Activated CD8-positive, alpha-beta T cell treated with anti-CD3 and anti-CD28 coated beads, Interleukin-2, amount 10 ng/mL, durations not matched to agents 7 days and 5 days (primary cell): ENCODE measurements at regions of chr1 and their contacts with region 1.

Region 1: GRCh38 chr1:160519642-160520435 is 3.2 kb downstream of the SLAMF6 start:
- DNase-seq: peak; percentile 48
- ATAC-seq: peak; percentile 65
- H3K4me3 Mint-ChIP-seq: peak overlapping the region; percentile 83
- H3K27ac Mint-ChIP-seq: peak overlapping the region; percentile 93
- H3K4me1 Mint-ChIP-seq: peaks cover 90% of the 10 kb centered on the region
- H3K27me3 Mint-ChIP-seq: no peaks in the 10 kb centered on the region

Region 2: DNA sequence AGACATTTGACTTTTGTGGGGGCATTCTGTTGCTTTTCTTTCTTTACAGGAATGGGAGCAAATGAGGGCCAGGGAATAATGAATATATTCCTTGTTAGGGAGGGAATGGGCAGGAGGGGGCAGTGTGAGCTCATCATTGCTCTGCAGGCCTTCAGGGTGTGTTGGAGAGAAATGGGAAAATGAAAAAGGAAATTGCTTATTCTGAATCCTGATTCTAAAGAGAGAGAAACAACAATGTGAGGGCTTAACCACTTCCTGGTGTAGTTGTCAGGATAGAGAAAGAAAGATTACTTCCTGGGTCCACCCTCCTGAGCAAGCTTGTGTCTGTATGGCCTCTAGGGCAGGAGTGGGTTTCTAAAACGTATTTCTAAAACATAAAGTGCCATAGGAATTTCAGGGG is 91.2 kb before region 1 on chr1:
- CTCF ChIA-PET with region 1: interaction called, 11 read pairs
- POLR2A ChIA-PET with region 1: interaction called, 7 read pairs
- DNase-seq: peak; percentile 49
- ATAC-seq: peak; percentile 71
- H3K4me3 Mint-ChIP-seq: peak overlapping the region; percentile 32
- H3K27ac Mint-ChIP-seq: peak overlapping the region; percentile 82
- H3K4me1 Mint-ChIP-seq: peaks cover 55% of the 10 kb centered on the region
- H3K27me3 Mint-ChIP-seq: no peaks in the 10 kb centered on the region

Region 3: DNA sequence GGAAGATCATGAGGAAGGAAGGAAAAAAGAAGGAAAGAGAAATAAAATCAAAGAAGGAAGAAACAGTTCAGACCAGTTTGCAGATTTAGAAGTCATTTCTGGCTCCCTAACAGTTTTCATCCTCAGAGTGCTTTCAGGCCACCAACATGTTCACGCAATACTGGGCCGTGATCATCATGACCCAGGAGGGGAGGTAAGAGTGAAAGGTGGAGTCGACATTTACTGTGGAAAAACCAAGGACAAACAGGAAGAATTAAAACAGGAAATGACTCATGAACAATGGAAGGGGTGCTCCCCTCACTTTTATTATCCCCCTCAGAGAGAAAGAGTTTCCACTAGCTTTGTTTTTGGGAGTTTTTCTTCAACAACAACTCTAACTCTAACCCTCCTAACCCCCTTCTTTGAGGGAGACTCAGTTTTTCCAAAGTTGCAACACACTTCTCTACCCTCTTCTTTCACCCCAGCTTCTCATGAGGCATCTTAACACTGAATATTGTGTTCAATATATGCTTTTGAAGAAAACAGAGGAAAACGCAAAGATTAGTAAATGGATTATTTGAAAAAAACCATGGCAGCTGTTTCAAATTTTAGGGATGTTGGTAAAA is 59.1 kb before region 1 on chr1:
- CTCF ChIA-PET with region 1: no interaction called
- POLR2A ChIA-PET with region 1: no interaction called
- DNase-seq: no peak
- ATAC-seq: peak; percentile 66
- H3K4me3 Mint-ChIP-seq: peak overlapping the region; percentile 53
- H3K27ac Mint-ChIP-seq: peak overlapping the region; percentile 92
- H3K4me1 Mint-ChIP-seq: peaks cover 49% of the 10 kb centered on the region
- H3K27me3 Mint-ChIP-seq: no peaks in the 10 kb centered on the region